Breast epithelium (tissue), 4 donors: ENCODE measurements at regions of chr13 and their contacts with region 1.

Region 1: GRCh38 chr13:87906411-87906810 is 235.2 kb downstream of the SLITRK5 start:
- DNase-seq: no peak
- H3K4me3 ChIP-seq: no peak overlapping the region
- H3K27ac ChIP-seq: no peak overlapping the region
- H3K4me1 ChIP-seq: no peaks in the 10 kb centered on the region
- H3K27me3 ChIP-seq: no peaks in the 10 kb centered on the region
- CTCF ChIP-seq: no peak
- POLR2A ChIP-seq: no peak

Region 2: DNA sequence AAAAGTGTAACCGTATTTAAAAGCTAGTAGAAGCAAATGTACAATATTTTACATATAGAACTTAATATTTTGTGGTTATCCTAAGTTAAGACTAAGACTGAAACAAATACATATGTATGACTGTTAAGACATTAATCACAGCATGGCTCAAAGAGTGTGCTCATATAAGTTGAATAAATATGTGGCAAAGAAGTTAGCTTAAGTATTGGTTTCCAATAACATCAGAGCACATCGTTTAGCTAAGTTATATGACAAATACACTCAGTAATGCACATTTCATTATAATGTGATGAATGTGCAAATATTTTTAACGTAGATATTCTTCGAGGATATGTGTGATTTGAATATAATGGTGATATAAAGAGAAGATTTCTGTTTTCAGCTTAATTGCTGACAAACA is 18.6 kb after region 1 on chr13:
- intact Hi-C with region 1: no loop called
- DNase-seq: no peak
- H3K4me3 ChIP-seq: no peak overlapping the region
- H3K27ac ChIP-seq: no peak overlapping the region
- H3K4me1 ChIP-seq: no peaks in the 10 kb centered on the region
- H3K27me3 ChIP-seq: no peaks in the 10 kb centered on the region
- CTCF ChIP-seq: no peak
- POLR2A ChIP-seq: no peak

Region 3: DNA sequence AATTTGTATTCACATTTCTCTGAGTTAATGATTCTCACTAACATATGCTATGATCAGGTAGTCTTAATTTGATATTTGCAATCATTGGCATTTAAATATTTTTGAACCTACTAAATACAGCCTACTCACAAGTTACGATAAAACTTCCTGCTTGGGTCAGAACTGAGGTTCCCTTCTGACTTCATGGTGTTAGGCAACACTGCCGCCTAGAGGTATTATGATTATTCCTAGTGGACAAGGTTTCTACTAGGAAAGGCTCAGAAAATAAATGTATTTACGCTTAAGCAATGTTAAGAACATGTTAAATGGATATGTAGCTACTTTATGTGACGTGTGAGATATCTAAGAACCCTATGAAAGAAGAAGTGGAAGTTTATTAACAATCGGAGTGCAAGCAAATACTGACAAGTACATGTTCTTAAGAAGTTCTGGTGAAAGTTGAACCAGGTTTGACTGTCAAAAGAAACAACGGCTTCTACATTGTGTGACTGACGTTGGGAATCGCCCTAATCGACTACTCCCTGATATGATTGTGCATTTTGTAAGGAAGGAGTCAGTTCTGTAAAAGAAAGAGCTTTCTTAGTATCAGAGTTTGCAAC is 1160.6 kb after region 1 on chr13:
- intact Hi-C with region 1: loop called (anchors 5 kb)
- DNase-seq: no peak
- H3K4me3 ChIP-seq: no peak overlapping the region
- H3K27ac ChIP-seq: no peak overlapping the region
- H3K4me1 ChIP-seq: no peaks in the 10 kb centered on the region
- H3K27me3 ChIP-seq: no peaks in the 10 kb centered on the region
- CTCF ChIP-seq: peak in 2 of 3 donors; percentile 58 to 62
- POLR2A ChIP-seq: no peak